CD4-positive, alpha-beta T cell (primary cell): ENCODE measurements at regions of chr11 and their contacts with region 1.

Region 1: DNA sequence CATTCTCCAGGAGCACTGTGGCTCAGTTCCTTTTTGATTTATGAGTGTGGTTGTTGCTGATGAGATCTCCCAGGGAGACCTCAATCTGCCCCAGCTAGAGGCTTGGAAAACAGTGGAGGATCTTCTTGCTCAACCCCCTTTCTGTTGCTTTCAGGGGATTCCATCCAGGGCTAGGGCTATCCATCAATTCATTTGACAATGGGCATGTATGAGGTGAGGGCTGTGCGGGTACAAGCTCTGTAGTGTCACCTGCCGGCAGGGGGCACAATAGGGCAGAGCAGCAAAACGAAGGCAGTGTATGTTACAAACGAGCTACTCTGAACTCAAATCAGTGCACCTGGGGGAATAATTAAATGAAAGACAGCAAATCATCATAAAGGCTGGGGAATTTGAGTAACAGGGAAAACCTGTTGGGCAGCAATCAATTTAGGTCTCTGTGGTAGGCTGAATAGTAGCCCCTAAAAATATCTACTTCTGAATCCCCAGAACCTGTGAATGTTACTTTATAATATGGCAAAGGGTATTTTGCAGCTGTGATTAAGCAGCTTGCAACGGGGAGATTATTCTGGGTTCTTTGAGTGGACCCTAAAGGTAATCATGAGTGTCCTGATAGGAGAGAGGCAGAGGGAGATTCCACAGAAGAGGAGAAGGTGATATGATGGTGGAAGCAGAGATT is 170.3 kb upstream of the ZBED5 start:
- DNase-seq: peak; percentile 70 to 90 (median 78)
- ATAC-seq: peak; percentile 99
- H3K4me3 ChIP-seq: no peak overlapping the region
- H3K4me3 Mint-ChIP-seq: no peak overlapping the region
- H3K27ac ChIP-seq: no peak overlapping the region
- H3K27ac Mint-ChIP-seq: no peak overlapping the region
- H3K4me1 ChIP-seq: no peaks in the 10 kb centered on the region
- H3K4me1 Mint-ChIP-seq: no peaks in the 10 kb centered on the region
- H3K27me3 ChIP-seq: no peaks in the 10 kb centered on the region
- H3K27me3 Mint-ChIP-seq: no peaks in the 10 kb centered on the region
- CTCF ChIP-seq: peak; percentile 86

Region 2: GRCh38 chr11:10933455-10934292 is 94.5 kb before region 1 on chr11:
- CTCF ChIA-PET with region 1: interaction called, 15 read pairs
- POLR2A ChIA-PET with region 1: interaction called, 3 read pairs
- intact Hi-C with region 1: loop called in 1 of 2 experiments (anchors 1 kb)
- DNase-seq: peak; percentile 67 to 90 (median 80)
- ATAC-seq: peak; percentile 89
- H3K4me3 ChIP-seq: peak overlapping the region; percentile 56
- H3K4me3 Mint-ChIP-seq: peak overlapping the region; percentile 90
- H3K27ac ChIP-seq: no peak overlapping the region
- H3K27ac Mint-ChIP-seq: peak overlapping the region; percentile 52
- H3K4me1 ChIP-seq: peaks cover 24% of the 10 kb centered on the region
- H3K4me1 Mint-ChIP-seq: peaks cover 24% of the 10 kb centered on the region
- H3K27me3 ChIP-seq: peaks cover 25 to 31% of the 10 kb centered on the region in 2 experiments
- H3K27me3 Mint-ChIP-seq: peaks cover 49% of the 10 kb centered on the region
- CTCF ChIP-seq: peak; percentile 94

Region 3: DNA sequence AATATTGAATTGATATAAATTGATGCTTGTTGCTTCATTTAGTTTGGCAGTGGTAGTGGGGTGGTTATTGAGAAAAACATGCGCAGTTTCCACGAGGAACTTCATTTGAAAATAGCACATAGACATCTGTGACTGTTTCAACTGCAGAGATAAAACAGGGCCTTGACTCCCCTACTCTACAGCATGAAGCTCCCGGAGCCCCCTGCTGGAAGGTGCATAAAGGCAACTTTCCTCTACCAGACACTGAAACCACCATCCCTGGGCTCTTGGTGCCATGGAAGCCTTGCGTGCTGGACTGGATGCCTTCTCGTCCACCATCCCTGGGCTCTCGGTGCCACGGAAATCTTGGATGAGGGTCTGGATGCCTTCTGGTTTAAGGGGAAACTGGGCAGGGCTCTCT is 129.0 kb after region 1 on chr11:
- CTCF ChIA-PET with region 1: interaction called, 100 read pairs
- POLR2A ChIA-PET with region 1: interaction called, 15 read pairs
- intact Hi-C with region 1: loop called (anchors 1 to 2 kb)
- DNase-seq: peak; percentile 50 to 84 (median 70)
- ATAC-seq: peak; percentile 67
- H3K4me3 ChIP-seq: no peak overlapping the region
- H3K4me3 Mint-ChIP-seq: peak overlapping the region; percentile 71
- H3K27ac ChIP-seq: no peak overlapping the region
- H3K27ac Mint-ChIP-seq: peak overlapping the region; percentile 92
- H3K4me1 ChIP-seq: peaks cover 33% of the 10 kb centered on the region
- H3K4me1 Mint-ChIP-seq: peaks cover 48% of the 10 kb centered on the region
- H3K27me3 ChIP-seq: no peaks in the 10 kb centered on the region
- H3K27me3 Mint-ChIP-seq: peaks cover 4% of the 10 kb centered on the region
- CTCF ChIP-seq: peak; percentile 80

Region 4: GRCh38 chr11:11265994-11266606 is 237.9 kb after region 1 on chr11:
- CTCF ChIA-PET with region 1: no interaction called
- POLR2A ChIA-PET with region 1: no interaction called
- intact Hi-C with region 1: loop called (anchors 1 to 2 kb)
- DNase-seq: peak; percentile 29 to 73 (median 50)
- ATAC-seq: peak; percentile 63
- H3K4me3 ChIP-seq: no peak overlapping the region
- H3K4me3 Mint-ChIP-seq: no peak overlapping the region
- H3K27ac ChIP-seq: no peak overlapping the region
- H3K27ac Mint-ChIP-seq: no peak overlapping the region
- H3K4me1 ChIP-seq: no peaks in the 10 kb centered on the region
- H3K4me1 Mint-ChIP-seq: no peaks in the 10 kb centered on the region
- H3K27me3 ChIP-seq: no peaks in the 10 kb centered on the region
- H3K27me3 Mint-ChIP-seq: peaks cover 2% of the 10 kb centered on the region
- CTCF ChIP-seq: peak; percentile 60

Region 5: GRCh38 chr11:11793073-11793472 is 764.9 kb after region 1 on chr11:
- CTCF ChIA-PET with region 1: interaction called, 32 read pairs
- POLR2A ChIA-PET with region 1: no interaction called
- intact Hi-C with region 1: no loop called
- DNase-seq: no peak
- ATAC-seq: no peak
- H3K4me3 ChIP-seq: no peak overlapping the region
- H3K4me3 Mint-ChIP-seq: no peak overlapping the region
- H3K27ac ChIP-seq: no peak overlapping the region
- H3K27ac Mint-ChIP-seq: no peak overlapping the region
- H3K4me1 ChIP-seq: no peaks in the 10 kb centered on the region
- H3K4me1 Mint-ChIP-seq: no peaks in the 10 kb centered on the region
- H3K27me3 ChIP-seq: peaks cover 3 to 9% of the 10 kb centered on the region in 2 experiments
- H3K27me3 Mint-ChIP-seq: peaks cover 34% of the 10 kb centered on the region
- CTCF ChIP-seq: no peak

Region 6: GRCh38 chr11:12281571-12282478 is 1253.7 kb after region 1 on chr11:
- CTCF ChIA-PET with region 1: no interaction called
- POLR2A ChIA-PET with region 1: no interaction called
- intact Hi-C with region 1: loop called in 1 of 2 experiments (anchors 10 kb)
- DNase-seq: peak; percentile 66 to 86 (median 74)
- ATAC-seq: peak; percentile 65
- H3K4me3 ChIP-seq: no peak overlapping the region
- H3K4me3 Mint-ChIP-seq: no peak overlapping the region
- H3K27ac ChIP-seq: no peak overlapping the region
- H3K27ac Mint-ChIP-seq: no peak overlapping the region
- H3K4me1 ChIP-seq: no peaks in the 10 kb centered on the region
- H3K4me1 Mint-ChIP-seq: no peaks in the 10 kb centered on the region
- H3K27me3 ChIP-seq: no peaks in the 10 kb centered on the region
- H3K27me3 Mint-ChIP-seq: no peaks in the 10 kb centered on the region
- CTCF ChIP-seq: peak; percentile 99